ENCODE measurements at regions of chr12 and their contacts with region 1.

Region 1: GRCh38 chr12:89451841-89452251 is 72.8 kb downstream of the GALNT4 start:
- DNase-seq: no peak
- H3K4me3 ChIP-seq: peak overlapping the region in 3 of 4 donors; percentile 3 to 24 (median 6)
- H3K27ac ChIP-seq: peak overlapping the region; percentile 82 to 86 (median 83)
- H3K4me1 ChIP-seq: peaks cover 30 to 68% (median 57%) of the 10 kb centered on the region in 4 donors
- H3K27me3 ChIP-seq: no peaks in the 10 kb centered on the region
- CTCF ChIP-seq: no peak
- EP300 ChIP-seq: no peak
- POLR2A ChIP-seq: no peak

Region 2: GRCh38 chr12:89162704-89163261 is 289.1 kb before region 1 on chr12:
- intact Hi-C with region 1: loop called (anchors 10 kb)
- DNase-seq: peak; percentile 93
- H3K4me3 ChIP-seq: no peak overlapping the region
- H3K27ac ChIP-seq: peak overlapping the region; percentile 63 to 77 (median 72)
- H3K4me1 ChIP-seq: peaks cover 20 to 54% (median 50%) of the 10 kb centered on the region in 4 donors
- H3K27me3 ChIP-seq: no peaks in the 10 kb centered on the region
- CTCF ChIP-seq: no peak
- EP300 ChIP-seq: no peak
- POLR2A ChIP-seq: no peak

Region 3: DNA sequence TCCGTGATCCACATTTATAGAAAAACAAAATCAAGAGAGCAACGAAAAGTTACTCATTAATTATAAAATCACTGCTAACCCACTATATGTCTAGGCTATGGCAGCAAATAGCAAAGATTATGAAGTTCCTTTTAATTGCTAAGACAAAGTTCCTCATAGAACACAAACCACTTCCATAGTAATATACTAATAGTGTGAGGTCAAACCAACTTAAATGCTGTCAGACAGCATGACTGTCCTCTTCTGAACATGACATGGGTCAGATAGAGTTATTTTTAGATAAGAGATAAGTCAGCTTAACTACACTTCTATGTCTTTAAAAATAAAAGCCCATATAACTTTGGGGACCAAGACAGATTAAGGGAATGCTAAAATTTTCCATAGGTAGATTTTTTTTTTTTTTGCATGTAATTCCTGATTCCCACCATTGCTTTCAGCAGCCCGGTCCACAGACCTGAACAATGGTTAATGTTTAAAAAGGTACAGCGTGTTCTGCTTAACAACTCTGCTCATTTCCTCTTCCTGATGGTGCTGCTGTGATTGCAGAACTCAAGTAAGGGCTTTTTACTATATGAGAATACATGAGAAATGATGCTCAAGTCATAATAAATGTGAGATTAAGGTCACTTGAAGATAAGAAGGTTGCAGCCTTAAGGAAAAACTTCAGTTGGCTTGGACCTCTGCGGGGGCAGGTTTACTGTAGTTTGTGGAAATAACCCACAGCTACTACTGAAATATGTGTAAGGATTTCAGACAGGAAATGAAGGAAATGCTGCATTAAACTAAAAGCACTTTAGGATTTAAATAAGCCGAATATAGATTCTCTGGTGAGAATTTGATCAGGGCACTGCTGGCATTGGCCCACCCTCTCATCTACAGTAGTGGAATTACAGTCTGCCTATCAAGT is 61.8 kb before region 1 on chr12:
- intact Hi-C with region 1: loop called (anchors 5 kb)
- DNase-seq: no peak
- H3K4me3 ChIP-seq: no peak overlapping the region
- H3K27ac ChIP-seq: peak overlapping the region; percentile 12 to 66 (median 54)
- H3K4me1 ChIP-seq: peaks cover 34 to 53% (median 39%) of the 10 kb centered on the region in 4 donors
- H3K27me3 ChIP-seq: no peaks in the 10 kb centered on the region
- CTCF ChIP-seq: no peak
- EP300 ChIP-seq: no peak
- POLR2A ChIP-seq: no peak

Region 4: DNA sequence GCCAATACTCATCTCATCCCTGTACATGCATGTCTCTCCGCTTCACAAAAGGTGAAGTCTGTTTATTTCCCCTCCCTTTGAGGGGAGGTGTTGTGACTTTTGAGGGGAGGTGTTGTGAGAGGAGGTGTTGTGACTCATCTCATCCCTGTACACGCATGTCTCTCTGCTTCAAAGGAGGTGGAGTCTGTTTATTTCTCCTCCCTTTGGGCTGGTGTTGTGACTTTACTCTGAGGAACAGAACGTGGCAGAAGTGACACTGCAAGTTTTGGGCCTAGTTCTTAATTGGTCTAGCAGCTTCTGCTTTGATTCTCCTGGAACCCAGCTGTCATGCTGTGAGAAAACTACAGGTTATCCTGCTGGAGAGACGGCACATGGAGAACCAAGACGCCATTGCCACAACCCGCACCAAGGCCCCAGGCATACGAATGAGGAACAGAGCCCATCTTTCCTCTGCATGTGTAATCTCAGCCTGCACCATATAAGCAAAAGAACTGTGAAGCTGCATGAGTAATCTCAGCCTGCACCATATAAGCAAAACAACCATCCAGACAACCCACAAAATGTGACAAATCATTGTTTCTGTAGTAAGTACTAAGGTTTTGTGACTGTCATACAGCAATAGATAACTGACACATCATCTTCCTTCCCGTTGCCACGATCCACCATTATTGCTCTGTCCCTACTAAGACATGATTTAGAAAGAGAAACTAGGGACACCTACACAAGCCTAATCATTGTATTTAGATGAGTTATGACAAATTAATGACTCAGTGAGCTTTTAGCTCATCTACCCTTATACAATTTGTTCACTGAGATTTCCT is 42.8 kb after region 1 on chr12:
- intact Hi-C with region 1: no loop called
- DNase-seq: peak; percentile 39
- H3K4me3 ChIP-seq: no peak overlapping the region
- H3K27ac ChIP-seq: no peak overlapping the region
- H3K4me1 ChIP-seq: no peaks in the 10 kb centered on the region
- H3K27me3 ChIP-seq: no peaks in the 10 kb centered on the region
- CTCF ChIP-seq: no peak
- EP300 ChIP-seq: no peak
- POLR2A ChIP-seq: no peak